BJ (cell line): ENCODE measurements at regions of chr4 and their contacts with region 1.

Region 1: GRCh38 chr4:40564004-40564403 is 65.7 kb downstream of the RBM47 start:
- DNase-seq: no peak
- H3K4me3 ChIP-seq: no peak overlapping the region
- H3K27me3 ChIP-seq: no peaks in the 10 kb centered on the region
- CTCF ChIP-seq: no peak

Region 2: DNA sequence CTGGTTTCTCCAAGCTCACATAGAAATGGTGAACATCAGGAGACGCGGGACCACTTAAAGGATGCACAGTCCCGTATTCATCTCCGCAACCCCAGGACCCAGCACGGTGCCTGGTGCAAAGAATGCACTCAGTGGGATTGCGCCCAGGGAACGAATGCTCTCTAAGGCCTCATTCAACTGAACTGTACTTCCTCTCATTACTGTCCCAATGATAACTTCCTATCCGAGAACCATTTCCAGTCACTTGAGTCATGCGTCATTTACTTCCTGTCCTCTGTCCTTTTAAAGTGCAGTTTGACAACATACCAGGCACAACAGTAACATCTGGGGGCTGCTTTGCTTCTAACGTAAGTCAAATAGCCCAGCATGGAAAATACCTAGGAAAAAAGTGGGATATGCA is 10.0 kb before region 1 on chr4:
- CTCF ChIA-PET with region 1: interaction called, 10 read pairs
- POLR2A ChIA-PET with region 1: no interaction called
- DNase-seq: no peak
- H3K4me3 ChIP-seq: no peak overlapping the region
- H3K27me3 ChIP-seq: no peaks in the 10 kb centered on the region
- CTCF ChIP-seq: no peak

Region 3: DNA sequence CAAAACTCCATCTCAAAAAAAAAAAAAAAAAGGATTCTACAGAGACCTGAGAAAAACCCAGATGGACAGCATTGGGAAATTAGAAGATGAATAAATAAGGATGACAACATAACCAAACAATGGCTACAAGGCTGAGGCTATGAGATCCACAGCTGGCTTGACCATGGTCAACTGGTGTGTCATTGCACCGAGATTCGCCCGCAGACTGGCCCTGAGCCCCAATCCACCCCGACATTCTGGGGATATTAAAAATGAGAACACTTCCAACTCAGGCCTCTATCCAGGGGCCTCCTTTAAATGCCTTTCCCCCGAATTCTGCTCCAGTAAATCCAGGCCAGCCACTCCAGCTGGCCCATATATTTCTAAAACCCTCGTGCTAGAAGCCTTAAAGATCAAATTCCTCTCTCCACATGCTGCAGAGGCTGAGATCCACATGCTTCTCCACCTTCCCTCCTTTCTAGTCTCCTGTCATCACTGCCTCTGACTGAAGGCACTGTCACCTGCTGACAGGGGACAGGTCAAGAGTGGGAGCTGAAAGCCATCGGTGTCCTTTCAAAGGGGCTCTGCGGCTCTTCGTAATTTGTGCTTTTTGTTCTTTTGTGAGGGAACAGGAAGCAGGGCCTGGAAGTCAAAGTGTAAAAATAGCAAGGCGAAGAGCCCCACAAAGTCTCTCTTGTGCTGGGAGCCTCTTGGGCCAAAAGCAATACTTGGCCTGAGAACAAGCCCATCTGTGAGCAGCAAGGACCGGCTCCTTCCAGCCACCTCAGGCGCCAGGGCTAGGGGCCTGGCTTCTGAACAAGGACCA is 389.5 kb after region 1 on chr4:
- CTCF ChIA-PET with region 1: no interaction called
- POLR2A ChIA-PET with region 1: no interaction called
- DNase-seq: no peak
- H3K4me3 ChIP-seq: no peak overlapping the region
- H3K27me3 ChIP-seq: no peaks in the 10 kb centered on the region
- CTCF ChIP-seq: no peak